ENCODE measurements at regions of chr11 and their contacts with region 1.

Region 1: DNA sequence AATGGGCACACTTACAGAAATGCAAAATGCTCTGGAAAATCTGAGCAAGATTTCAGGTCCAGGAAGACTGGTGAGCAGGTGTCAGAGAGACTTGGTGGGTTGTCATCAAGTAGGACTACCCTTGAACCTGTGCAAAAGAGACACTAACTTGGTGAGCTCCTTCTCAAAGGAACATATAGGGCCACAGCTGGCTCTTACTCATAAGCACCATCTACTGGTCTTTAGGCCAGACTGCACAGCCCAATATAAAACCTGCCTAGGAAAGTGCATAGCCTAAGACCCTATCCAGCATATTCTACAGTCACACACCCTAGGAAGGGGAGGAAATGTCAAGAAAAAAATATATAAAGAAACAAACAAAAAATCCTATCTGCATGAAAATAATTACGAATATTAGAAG is 18.2 kb upstream of the OR10W1 start:
- DNase-seq: no peak
- ATAC-seq: peak; percentile 97
- H3K4me3 Mint-ChIP-seq: no peak overlapping the region
- H3K27ac Mint-ChIP-seq: no peak overlapping the region
- H3K4me1 Mint-ChIP-seq: no peaks in the 10 kb centered on the region
- H3K27me3 Mint-ChIP-seq: no peaks in the 10 kb centered on the region
- CTCF ChIP-seq: no peak; the same call in 1 of the 2 replicates

Region 2: DNA sequence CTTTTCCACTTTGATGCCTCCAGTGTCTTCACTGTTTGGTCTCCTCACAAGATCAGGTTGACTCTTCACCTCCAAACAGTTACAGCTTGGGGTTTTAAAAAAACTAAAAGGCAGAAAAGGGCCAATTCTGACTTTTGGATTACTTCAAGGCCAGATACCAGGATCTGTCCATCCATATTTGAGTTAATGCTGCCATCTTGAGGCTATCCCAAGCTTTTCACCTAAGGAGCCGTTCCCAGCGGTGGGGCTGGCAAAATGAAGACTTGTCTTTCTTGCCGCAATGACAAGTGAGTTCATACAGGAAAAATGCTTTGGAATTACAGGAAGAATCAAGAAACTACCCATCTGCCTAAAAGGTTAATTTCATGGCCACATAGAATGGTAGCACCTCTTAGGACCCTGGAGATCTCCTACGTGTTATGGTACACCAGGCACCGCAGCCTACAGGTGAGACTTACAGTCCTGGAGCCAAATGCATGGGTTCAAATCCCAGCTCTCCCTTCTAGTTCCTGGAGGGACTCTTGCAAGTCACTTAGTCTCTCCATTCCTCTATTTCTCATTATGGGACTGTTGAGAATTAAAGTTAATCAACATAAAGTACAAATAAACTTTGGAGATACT is 227.6 kb after region 1 on chr11:
- CTCF ChIA-PET with region 1: interaction called, 16 read pairs
- POLR2A ChIA-PET with region 1: no interaction called
- DNase-seq: peak; percentile 64
- ATAC-seq: peak; percentile 87
- H3K4me3 Mint-ChIP-seq: no peak overlapping the region
- H3K27ac Mint-ChIP-seq: no peak overlapping the region
- H3K4me1 Mint-ChIP-seq: peaks cover 16% of the 10 kb centered on the region
- H3K27me3 Mint-ChIP-seq: 0 out of 2 replicates have a peak, but pooled peaks cover 5% of the 10 kb centered on the region
- CTCF ChIP-seq: 0 out of 2 replicates have a peak, but pooled peaks have one; percentile 41